Right ventricle myocardium inferior (tissue), 1 donor: ENCODE measurements at regions of chr17 and their contacts with region 1.

Region 1: GRCh38 chr17:63549946-63550807 is at the start of gene DCAF7:
- DNase-seq: peak; percentile 98
- ATAC-seq: peak; percentile 99
- total RNA-seq, gene DCAF7: 36.8 TPM

Region 2: GRCh38 chr17:63434876-63435684 is 115.1 kb before region 1 on chr17:
- intact Hi-C with region 1: loop called (anchors 5 kb)
- DNase-seq: no peak
- ATAC-seq: peak; percentile 22

Region 3: DNA sequence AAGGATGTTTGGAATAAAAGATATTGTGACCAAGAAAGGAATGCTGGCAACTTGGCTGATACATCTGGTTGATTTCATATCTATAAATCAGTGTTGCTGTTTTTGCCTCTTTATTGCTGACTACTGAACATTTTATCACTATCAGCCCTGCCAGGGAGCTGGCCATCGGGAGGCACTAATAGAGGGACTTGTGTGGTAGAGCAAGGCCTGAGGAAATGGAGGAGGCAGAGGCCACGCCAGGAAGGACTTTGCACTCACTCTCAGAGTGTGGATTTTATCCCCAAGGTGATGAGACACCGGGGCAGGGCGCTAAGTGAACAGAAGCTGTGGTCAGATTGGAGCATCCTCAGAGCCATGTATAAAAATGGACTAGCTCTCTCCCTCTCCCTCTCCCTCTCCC is 94.8 kb before region 1 on chr17:
- intact Hi-C with region 1: no loop called
- DNase-seq: no peak
- ATAC-seq: no peak

Region 4: DNA sequence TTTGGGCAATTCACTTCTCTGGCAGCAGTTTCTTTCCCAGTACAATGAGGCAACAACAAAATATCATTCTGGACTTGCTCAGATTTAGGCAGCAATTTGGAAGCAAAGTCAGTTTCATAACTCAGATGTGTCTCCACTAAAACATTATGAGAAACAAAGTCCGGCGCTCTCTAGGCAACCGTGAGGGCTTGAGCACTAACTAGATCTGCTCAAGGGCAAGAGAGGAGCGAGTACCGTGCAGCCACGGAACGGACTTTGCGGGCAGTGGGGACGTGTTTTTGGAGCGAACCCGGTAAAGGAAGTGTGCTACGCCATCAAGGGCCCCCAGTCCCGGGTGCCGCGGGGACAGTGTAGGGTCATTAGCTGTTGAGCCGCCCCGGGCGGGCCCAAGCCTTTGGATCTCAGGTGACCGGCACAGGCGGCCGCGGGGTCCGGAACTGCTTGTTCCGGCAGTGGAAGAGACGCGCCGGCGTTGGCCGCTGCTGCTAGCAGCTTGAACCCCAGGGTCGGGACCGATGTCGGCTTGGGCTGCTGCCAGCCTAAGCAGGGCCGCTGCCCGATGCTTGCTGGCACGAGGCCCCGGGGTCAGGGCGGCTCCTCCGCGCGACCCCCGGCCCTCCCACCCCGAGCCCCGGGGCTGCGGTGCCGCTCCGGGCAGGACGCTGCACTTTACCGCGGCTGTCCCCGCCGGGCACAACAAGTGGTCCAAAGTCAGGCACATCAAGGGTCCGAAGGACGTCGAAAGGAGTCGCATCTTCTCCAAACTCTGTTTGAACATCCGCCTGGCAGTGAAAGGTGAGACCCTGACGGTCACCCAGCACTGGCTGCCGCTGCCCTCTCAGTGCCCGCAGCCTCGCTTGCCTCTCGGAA is 50.6 kb after region 1 on chr17 and contains the start of gene TACO1:
- intact Hi-C with region 1: loop called (anchors 5 kb)
- DNase-seq: peak; percentile 91
- ATAC-seq: peak; percentile 96
- total RNA-seq, gene TACO1: 41.5 TPM